ENCODE measurements at regions of chr12 and their contacts with region 1.

Region 1: GRCh38 chr12:94133964-94134795 is 14.2 kb upstream of the PLXNC1 start:
- DNase-seq: no peak
- H3K4me3 ChIP-seq: no peak overlapping the region
- H3K27ac ChIP-seq: no peak overlapping the region
- H3K4me1 ChIP-seq: no peaks in the 10 kb centered on the region
- H3K27me3 ChIP-seq: no peaks in the 10 kb centered on the region
- CTCF ChIP-seq: peak in 2 of 3 experiments; percentile 39 to 63; a peak in 2 of 4 replicates
- EP300 ChIP-seq: no peak
- POLR2A ChIP-seq: no peak
- RAD21 ChIP-seq: peak; percentile 66 to 70

Region 2: GRCh38 chr12:94145191-94145983 is 11.2 kb after region 1 on chr12:
- CTCF ChIA-PET with region 1: interaction called, 26 read pairs
- POLR2A ChIA-PET with region 1: no interaction called
- DNase-seq: no peak
- H3K4me3 ChIP-seq: no peak overlapping the region
- H3K27ac ChIP-seq: no peak overlapping the region
- H3K4me1 ChIP-seq: peaks cover 2 to 15% (median 5%) of the 10 kb centered on the region in 4 experiments
- H3K27me3 ChIP-seq: peaks cover 28 to 46% (median 37%) of the 10 kb centered on the region in 4 experiments
- CTCF ChIP-seq: peak in 1 of 3 experiments; percentile 2; a peak in 1 of 4 replicates
- EP300 ChIP-seq: no peak
- POLR2A ChIP-seq: no peak
- RAD21 ChIP-seq: peak; percentile 47 to 50

Region 3: DNA sequence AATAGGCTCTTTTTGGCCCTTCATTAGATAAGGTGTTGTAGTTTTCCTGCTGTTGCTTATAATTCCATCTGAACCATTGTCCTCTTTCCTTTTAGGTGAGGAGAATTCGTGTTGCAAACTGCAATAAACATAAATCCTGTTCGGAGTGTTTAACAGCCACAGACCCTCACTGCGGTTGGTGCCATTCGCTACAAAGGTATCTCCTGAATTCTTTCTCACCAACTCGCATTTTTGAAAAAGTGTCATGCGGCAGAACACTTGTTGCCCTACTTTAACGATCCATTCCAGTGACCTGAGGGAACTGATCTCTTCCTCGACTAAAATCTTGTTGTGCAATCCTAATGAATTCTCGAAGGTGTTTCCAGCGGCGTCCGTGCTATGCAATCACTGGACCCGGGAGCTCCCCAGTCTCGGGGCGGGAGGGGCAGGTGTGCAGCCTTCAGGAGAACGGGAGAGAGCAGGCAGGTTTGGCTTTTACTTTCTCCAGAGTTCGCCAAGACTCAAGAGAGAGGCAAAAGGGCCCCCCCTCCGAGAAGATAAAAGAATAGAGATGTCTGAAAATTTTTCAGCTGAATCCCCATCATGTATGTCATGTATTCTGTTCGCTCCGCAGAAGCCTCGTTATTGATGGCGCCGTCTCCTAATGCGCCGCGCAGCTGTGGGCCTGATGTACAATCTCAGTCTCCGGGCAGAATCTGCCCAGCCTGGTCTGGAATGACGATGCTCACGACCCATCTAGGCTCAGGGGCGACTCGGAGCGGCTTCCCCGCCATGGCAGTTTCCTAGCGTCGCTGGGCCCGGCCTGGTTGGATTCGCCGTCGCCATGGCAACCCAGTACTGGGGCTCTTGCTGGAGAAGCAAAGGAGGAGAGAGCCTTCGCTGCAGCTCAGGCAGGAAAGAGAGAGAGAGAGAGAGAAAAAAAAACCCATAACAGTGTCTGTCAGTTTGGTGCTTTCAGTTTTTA is 52.4 kb after region 1 on chr12:
- CTCF ChIA-PET with region 1: interaction called, 10 read pairs
- POLR2A ChIA-PET with region 1: no interaction called
- DNase-seq: peak in 1 of 2 experiments; percentile 87
- H3K4me3 ChIP-seq: peak overlapping the region in 1 of 4 experiments; percentile 37; a peak in 1 of 8 replicates
- H3K27ac ChIP-seq: no peak overlapping the region
- H3K4me1 ChIP-seq: peaks cover 0 to 4% (median 0%) of the 10 kb centered on the region in 4 experiments; a peak in 3 of 7 replicates
- H3K27me3 ChIP-seq: peaks cover 0 to 12% (median 7%) of the 10 kb centered on the region in 4 experiments; a peak in 6 of 7 replicates
- CTCF ChIP-seq: no peak
- EP300 ChIP-seq: no peak
- POLR2A ChIP-seq: no peak
- RAD21 ChIP-seq: no peak

Region 4: GRCh38 chr12:94244165-94245133 is 110.3 kb after region 1 on chr12:
- CTCF ChIA-PET with region 1: no interaction called
- POLR2A ChIA-PET with region 1: no interaction called
- DNase-seq: no peak
- H3K4me3 ChIP-seq: no peak overlapping the region
- H3K27ac ChIP-seq: no peak overlapping the region
- H3K4me1 ChIP-seq: peaks cover 0 to 14% (median 5%) of the 10 kb centered on the region in 4 experiments; a peak in 5 of 7 replicates
- H3K27me3 ChIP-seq: no peaks in the 10 kb centered on the region; a peak in 1 of 7 replicates
- CTCF ChIP-seq: no peak
- EP300 ChIP-seq: no peak
- POLR2A ChIP-seq: no peak
- RAD21 ChIP-seq: no peak

Region 5: GRCh38 chr12:94532490-94533422 is 398.6 kb after region 1 on chr12:
- CTCF ChIA-PET with region 1: interaction called, 80 read pairs
- POLR2A ChIA-PET with region 1: no interaction called
- DNase-seq: peak; percentile 59 to 92
- H3K4me3 ChIP-seq: no peak overlapping the region; a peak in 1 of 8 replicates
- H3K27ac ChIP-seq: no peak overlapping the region
- H3K4me1 ChIP-seq: peaks cover 0 to 2% (median 0%) of the 10 kb centered on the region in 4 experiments; a peak in 2 of 7 replicates
- H3K27me3 ChIP-seq: no peaks in the 10 kb centered on the region
- CTCF ChIP-seq: peak; percentile 89 to 90 (median 89)
- EP300 ChIP-seq: no peak
- POLR2A ChIP-seq: no peak
- RAD21 ChIP-seq: peak; percentile 99

Measured in H1 (cell line).